Prostate gland (tissue), 2 donors: ENCODE measurements at regions of chr6 and their contacts with region 1.

Region 1: DNA sequence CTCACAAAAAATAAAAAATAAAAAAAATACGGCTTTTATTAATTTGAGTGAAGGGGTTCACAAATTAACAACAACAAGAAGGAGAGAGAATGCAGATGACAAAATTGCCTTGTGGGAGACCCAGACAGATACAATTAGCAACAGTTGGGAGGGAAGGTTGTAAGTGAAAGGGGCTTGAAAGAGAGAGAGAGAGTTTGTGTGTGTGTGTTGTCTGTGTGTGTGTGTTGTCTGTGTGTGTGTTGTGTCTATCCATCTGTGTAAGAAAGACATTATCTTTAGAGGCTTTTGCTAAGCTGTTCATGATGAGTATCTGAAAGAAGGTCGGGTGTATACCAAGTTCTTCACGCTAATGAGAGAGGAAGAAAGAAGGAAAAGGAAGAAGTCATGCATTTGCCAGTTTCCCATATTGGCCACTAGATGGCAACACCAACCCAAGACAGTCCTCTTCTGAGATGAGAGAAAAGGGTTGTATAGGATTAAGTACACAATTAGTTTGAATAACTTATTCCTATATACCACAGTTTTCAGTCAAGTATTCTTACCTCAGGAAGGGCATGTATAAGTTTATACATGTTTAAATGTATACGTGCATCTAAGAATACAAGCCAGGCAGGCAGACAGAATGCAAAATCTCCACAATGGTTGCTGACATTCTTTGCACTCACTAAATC is 63.7 kb upstream of the CD2AP start:
- DNase-seq: peak; percentile 51
- H3K4me3 ChIP-seq: peak overlapping the region; percentile 33 to 36
- H3K27ac ChIP-seq: peak overlapping the region; percentile 47 to 61
- H3K4me1 ChIP-seq: no peaks in the 10 kb centered on the region
- H3K27me3 ChIP-seq: no peaks in the 10 kb centered on the region
- CTCF ChIP-seq: peak; percentile 87 to 91 (median 90)
- POLR2A ChIP-seq: no peak

Region 2: DNA sequence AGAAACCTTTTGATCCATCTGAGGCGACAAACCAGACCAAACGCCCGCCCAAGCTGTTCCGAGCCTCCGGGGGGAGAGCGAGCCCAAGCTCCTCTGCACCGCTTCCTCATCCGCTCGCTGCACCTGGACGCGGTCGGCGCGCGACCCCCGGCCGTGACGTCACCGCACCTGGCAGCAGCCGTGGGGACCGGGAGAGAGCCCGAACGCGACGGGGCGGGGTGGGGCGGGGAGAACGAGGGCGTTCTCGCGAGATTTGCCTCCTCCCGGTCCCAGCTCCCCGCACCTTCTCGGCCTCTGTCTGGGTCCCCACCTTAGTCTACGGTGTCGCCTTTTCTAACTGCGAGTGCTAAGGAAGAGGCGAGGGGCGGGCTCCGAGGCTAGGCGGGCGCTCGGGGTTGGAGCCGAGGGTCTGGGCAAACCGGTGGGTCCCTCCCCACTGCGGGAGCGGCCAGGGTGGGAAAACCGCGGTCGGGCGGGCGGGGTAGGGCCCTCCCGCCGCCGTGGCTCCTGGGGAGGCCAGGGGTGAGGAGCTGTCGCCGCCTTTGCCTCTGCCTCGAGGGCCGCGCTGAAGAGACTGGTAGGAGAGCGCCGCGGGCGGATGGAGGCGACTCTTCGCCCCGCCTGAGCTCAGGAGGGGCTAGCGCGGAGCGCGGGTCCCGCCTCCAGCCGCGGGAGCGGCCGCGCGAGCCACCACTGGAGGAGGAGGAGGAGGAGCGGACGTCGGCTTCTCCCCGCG is 63.8 kb after region 1 on chr6 and contains the start of gene CD2AP:
- intact Hi-C with region 1: loop called (anchors 2 kb)
- DNase-seq: peak; percentile 89
- H3K4me3 ChIP-seq: peak within 1 kb of the TSS; percentile 93 to 97
- H3K27ac ChIP-seq: peak within 1 kb of the TSS; percentile 98 to 99
- H3K4me1 ChIP-seq: no peaks in the 10 kb centered on the region
- H3K27me3 ChIP-seq: no peaks in the 10 kb centered on the region
- CTCF ChIP-seq: peak in 1 of 4 experiments; percentile 12
- POLR2A ChIP-seq: peak; percentile 68
- total RNA-seq, gene CD2AP: 30.3 to 33.6 TPM

Region 3: DNA sequence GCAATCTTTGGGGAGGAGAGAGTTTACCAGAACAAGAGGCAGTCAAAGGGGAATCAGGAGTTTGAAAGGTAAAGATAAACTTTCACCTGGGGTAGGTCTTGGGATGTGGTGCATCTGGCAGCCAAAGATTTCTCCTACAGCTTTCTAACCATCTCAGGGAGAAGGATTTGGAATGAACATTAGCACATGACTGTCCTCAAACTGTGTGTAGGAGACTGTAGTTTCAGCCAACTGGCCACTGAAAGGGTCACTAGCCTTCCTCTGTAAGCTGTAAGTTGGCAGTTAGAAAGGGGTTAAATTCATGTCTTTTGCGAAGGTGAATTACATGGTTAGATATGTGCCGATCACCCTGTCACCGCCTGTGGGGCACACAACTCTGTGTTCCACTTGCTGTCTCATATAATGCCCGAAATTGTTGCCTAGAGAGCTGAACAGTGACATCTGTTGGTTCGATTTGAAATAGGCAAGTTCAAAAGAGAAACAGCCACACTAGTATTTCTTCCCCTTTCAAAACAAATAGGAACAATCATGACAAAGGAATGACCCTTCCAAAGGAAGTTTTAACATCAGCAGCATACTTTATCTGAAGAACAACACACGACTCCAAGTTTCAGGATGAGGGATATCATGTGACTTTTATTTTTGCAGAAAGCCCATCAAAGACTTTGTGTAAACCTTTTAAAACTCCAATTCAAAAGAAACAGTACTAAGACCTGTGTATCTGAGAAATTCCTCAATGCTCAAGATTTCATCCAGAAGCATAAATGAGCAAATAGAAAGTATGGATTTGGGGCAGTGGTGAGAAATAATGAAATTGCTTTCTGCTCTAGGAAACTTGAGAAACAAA is 366.8 kb after region 1 on chr6:
- intact Hi-C with region 1: loop called (anchors 1 kb)
- DNase-seq: peak; percentile 33
- H3K4me3 ChIP-seq: no peak overlapping the region
- H3K27ac ChIP-seq: no peak overlapping the region
- H3K4me1 ChIP-seq: no peaks in the 10 kb centered on the region
- H3K27me3 ChIP-seq: no peaks in the 10 kb centered on the region
- CTCF ChIP-seq: peak in 3 of 4 experiments; percentile 50 to 77 (median 63)
- POLR2A ChIP-seq: no peak